GM18951 (cell line): ENCODE measurements at regions of chr3 and their contacts with region 1.

Region 1: GRCh38 chr3:55485211-55485791 is 1.8 kb downstream of the WNT5A start:
- POLR2A ChIP-seq: no peak

Region 2: GRCh38 chr3:55059027-55059629 is 426.2 kb before region 1 on chr3:
- in situ Hi-C with region 1: no loop called
- POLR2A ChIP-seq: no peak

Region 3: GRCh38 chr3:55746808-55747413 is 261.6 kb after region 1 on chr3:
- in situ Hi-C with region 1: loop called (anchors 25 kb)
- POLR2A ChIP-seq: no peak

Region 4: GRCh38 chr3:56251343-56251945 is 766.1 kb after region 1 on chr3:
- in situ Hi-C with region 1: loop called (anchors 10 kb)
- POLR2A ChIP-seq: no peak